Natural killer cell (primary cell): ENCODE measurements at regions of chr10 and their contacts with region 1.

Region 1: DNA sequence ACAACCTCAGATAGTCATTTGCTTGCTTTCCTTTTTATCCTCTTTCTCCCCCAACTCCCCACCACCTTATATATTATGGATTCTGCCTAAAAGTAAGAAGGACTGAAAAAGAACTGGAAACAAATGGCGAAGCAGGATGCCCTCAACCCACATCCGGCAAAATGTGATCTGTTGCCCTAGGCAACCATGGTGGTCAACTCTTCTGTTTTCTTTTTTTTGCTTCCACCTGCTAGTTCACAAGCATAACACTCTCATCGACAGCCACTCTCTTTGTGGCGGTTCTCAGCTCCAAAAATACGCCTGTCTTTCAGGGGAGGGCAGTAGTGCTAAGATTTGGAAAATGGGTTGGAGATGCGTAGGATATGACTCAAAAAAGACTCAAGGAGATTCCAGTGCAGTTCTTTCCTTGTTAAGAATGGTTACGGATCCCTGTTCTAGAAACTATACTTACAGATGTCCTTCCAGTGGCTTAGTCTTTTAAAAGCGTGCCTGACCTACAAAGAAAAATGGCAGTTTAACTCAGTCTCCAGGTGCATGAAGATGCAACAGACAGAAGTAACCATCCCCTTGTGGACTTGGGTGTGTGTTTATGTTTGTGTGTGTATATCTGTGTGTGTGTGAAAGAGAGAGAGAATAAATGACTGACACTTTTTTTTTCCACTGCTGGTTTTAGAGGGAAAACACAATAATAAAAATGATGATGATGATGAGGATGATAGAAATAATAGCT is 10.7 kb downstream of the APBB1IP start:
- DNase-seq: peak; percentile 72 to 93
- ATAC-seq: peak; percentile 68 to 84 (median 81)
- H3K4me3 ChIP-seq: peak overlapping the region; percentile 11
- H3K4me3 Mint-ChIP-seq: peak overlapping the region; percentile 84
- H3K27ac ChIP-seq: peak overlapping the region; percentile 96
- H3K27ac Mint-ChIP-seq: peak overlapping the region; percentile 98
- H3K4me1 ChIP-seq: peaks cover 48% of the 10 kb centered on the region
- H3K4me1 Mint-ChIP-seq: peaks cover 82 to 85% of the 10 kb centered on the region in 2 donors
- H3K27me3 ChIP-seq: no peaks in the 10 kb centered on the region
- H3K27me3 Mint-ChIP-seq: no peaks in the 10 kb centered on the region
- CTCF ChIP-seq: peak; percentile 4

Region 2: GRCh38 chr10:26430641-26431164 is 18.2 kb before region 1 on chr10:
- intact Hi-C with region 1: loop called (anchors 2 kb)
- DNase-seq: peak in 1 of 2 donors; percentile 65
- ATAC-seq: peak; percentile 91 to 93 (median 92)
- H3K4me3 ChIP-seq: no peak overlapping the region
- H3K4me3 Mint-ChIP-seq: peak overlapping the region; percentile 71
- H3K27ac ChIP-seq: peak overlapping the region; percentile 56
- H3K27ac Mint-ChIP-seq: peak overlapping the region in 1 of 2 donors; percentile 85
- H3K4me1 ChIP-seq: peaks cover 26% of the 10 kb centered on the region
- H3K4me1 Mint-ChIP-seq: peaks cover 14 to 16% of the 10 kb centered on the region in 2 donors
- H3K27me3 ChIP-seq: no peaks in the 10 kb centered on the region
- H3K27me3 Mint-ChIP-seq: peaks cover 0 to 2% of the 10 kb centered on the region in 2 donors
- CTCF ChIP-seq: no peak

Region 3: GRCh38 chr10:26468700-26469099 is 19.8 kb after region 1 on chr10:
- intact Hi-C with region 1: loop called (anchors 2 kb)
- DNase-seq: peak in 1 of 2 donors; percentile 81
- ATAC-seq: peak; percentile 69 to 83 (median 78)
- H3K4me3 ChIP-seq: no peak overlapping the region
- H3K4me3 Mint-ChIP-seq: peak overlapping the region; percentile 80
- H3K27ac ChIP-seq: peak overlapping the region; percentile 4
- H3K27ac Mint-ChIP-seq: peak overlapping the region; percentile 84 to 88
- H3K4me1 ChIP-seq: peaks cover 60% of the 10 kb centered on the region
- H3K4me1 Mint-ChIP-seq: peaks cover 88 to 95% of the 10 kb centered on the region in 2 donors
- H3K27me3 ChIP-seq: no peaks in the 10 kb centered on the region
- H3K27me3 Mint-ChIP-seq: no peaks in the 10 kb centered on the region
- CTCF ChIP-seq: no peak

Region 4: DNA sequence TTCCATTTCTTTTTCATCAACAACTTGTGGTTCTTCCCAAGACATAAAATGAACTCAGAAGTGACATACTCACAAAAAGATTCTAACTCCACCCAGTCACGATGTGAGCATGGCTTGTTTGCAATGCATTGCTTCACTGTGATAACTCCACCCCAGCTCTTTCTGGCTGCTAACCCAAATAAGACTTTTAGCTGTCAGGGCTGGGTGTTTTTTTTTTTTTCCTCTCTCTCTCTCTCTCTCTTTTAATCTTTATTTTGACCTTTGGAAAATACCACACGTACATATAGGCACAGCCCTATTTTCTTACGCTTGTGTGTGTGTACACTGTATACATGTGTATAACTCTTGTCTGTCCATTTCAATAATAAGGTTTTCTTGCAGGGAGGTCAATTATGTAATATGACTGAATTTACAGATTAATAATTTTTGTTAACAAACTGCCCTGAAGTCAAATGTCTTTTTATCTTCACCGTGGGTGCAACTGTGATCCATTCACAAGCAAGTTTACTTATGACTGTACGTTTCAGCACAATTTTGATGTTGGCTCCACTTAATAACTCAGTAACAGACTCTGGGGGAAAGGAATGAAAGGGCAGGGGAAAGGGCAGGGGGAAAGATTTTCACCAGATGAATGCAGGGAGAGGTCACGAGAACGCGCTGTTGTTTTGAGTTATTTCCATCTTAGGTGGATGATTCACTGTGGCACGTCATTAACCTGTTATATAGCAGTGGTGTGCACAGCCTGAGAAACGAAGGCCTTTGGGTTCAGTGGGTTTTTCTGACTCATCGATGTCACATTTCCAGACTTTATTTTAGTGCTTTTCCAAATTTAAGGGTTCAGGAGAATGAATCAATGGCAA is 38.4 kb after region 1 on chr10:
- intact Hi-C with region 1: loop called (anchors 1 kb)
- DNase-seq: peak; percentile 61 to 87
- ATAC-seq: peak; percentile 72 to 87 (median 86)
- H3K4me3 ChIP-seq: no peak overlapping the region
- H3K4me3 Mint-ChIP-seq: peak overlapping the region; percentile 78
- H3K27ac ChIP-seq: peak overlapping the region; percentile 90
- H3K27ac Mint-ChIP-seq: peak overlapping the region; percentile 96 to 98
- H3K4me1 ChIP-seq: peaks cover 45% of the 10 kb centered on the region
- H3K4me1 Mint-ChIP-seq: peaks cover 64 to 66% of the 10 kb centered on the region in 2 donors
- H3K27me3 ChIP-seq: no peaks in the 10 kb centered on the region
- H3K27me3 Mint-ChIP-seq: no peaks in the 10 kb centered on the region
- CTCF ChIP-seq: no peak